Calu3 (cell line): ENCODE measurements at regions of chr6 and their contacts with region 1.

Region 1: DNA sequence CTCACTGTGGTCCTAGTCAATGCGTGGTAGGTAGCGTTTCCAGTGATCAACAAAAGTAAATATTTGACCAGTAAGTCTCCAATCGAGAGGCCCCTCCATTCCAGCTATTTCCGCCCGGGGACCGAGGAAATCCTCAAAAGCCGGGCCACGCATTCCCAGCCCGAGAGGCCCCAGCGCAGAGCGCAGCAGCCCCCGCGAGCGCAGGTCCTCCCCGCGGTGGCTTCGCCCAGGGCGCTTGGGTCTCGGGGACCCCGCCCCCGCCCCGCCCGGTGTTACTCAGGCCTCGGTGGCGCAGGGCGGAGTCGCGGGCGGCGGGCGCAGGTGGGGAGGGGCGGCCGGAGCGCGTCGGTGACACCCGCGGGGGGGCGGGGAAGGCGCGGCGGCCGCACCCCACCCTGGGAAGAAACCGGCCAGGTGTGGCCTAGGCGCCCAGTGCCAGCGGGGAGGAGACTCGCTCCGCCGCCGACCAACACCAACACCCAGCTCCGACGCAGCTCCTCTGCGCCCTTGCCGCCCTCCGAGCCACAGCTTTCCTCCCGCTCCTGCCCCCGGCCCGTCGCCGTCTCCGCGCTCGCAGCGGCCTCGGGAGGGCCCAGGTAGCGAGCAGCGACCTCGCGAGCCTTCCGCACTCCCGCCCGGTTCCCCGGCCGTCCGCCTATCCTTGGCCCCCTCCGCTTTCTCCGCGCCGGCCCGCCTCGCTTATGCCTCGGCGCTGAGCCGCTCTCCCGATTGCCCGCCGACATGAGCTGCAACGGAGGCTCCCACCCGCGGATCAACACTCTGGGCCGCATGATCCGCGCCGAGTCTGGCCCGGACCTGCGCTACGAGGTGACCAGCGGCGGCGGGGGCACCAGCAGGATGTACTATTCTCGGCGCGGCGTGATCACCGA is at the start of gene DSP:
- DNase-seq: peak; percentile 83
- H3K4me3 Mint-ChIP-seq: peak within 1 kb of the TSS; percentile 91
- H3K27ac Mint-ChIP-seq: no peak within 1 kb of the TSS
- H3K4me1 Mint-ChIP-seq: peaks cover 26% of the 10 kb centered on the region
- H3K27me3 Mint-ChIP-seq: no peaks in the 10 kb centered on the region
- CTCF ChIP-seq: no peak
- total RNA-seq, gene DSP: 46.4 and 57.7 TPM in 2 replicates

Region 2: GRCh38 chr6:7424967-7425807 is 116.2 kb before region 1 on chr6:
- CTCF ChIA-PET with region 1: interaction called, 6 read pairs
- intact Hi-C with region 1: loop called (anchors 5 kb)
- DNase-seq: peak; percentile 12
- H3K4me3 Mint-ChIP-seq: no peak overlapping the region
- H3K27ac Mint-ChIP-seq: no peak overlapping the region
- H3K4me1 Mint-ChIP-seq: no peaks in the 10 kb centered on the region
- H3K27me3 Mint-ChIP-seq: no peaks in the 10 kb centered on the region
- CTCF ChIP-seq: no peak

Region 3: GRCh38 chr6:7468382-7469081 is 72.9 kb before region 1 on chr6:
- CTCF ChIA-PET with region 1: no interaction called
- intact Hi-C with region 1: loop called (anchors 5 kb)
- DNase-seq: peak; percentile 5
- H3K4me3 Mint-ChIP-seq: peak overlapping the region; percentile 73
- H3K27ac Mint-ChIP-seq: peak overlapping the region; percentile 55
- H3K4me1 Mint-ChIP-seq: peaks cover 12% of the 10 kb centered on the region
- H3K27me3 Mint-ChIP-seq: no peaks in the 10 kb centered on the region
- CTCF ChIP-seq: no peak

Region 4: DNA sequence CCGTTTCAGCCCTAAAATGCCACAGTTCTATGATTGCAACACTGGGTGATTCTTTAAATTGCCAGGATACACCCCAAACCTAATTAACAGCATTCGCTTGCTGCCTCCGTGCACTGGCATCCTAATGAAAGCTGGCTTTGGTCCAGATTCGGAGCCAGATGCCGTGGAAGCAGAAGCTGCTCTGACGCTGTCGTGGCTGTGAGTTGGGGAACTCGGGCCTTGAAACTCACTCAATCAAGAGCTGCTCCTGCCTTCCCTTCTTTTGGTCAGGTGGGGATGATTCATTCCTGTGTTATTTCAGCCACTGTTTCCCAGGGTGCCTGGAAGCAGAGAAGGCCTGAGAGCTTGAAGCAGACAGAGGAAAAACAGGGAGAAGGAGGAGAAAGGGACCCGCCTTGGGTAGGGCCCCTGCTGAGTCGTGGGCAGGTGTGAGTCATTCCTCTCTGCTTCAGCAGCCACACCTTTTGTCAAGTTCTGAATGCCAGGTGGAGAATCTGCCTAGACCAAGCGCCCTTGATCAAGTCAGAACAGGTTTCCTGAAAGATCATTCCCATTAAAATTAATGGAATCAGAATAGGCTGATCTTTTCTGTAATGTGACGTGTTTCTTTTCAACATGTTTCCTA is 36.1 kb before region 1 on chr6:
- CTCF ChIA-PET with region 1: interaction called, 3 read pairs
- intact Hi-C with region 1: loop called (anchors 5 kb)
- DNase-seq: peak; percentile 77
- H3K4me3 Mint-ChIP-seq: peak overlapping the region; percentile 49
- H3K27ac Mint-ChIP-seq: peak overlapping the region; percentile 73
- H3K4me1 Mint-ChIP-seq: peaks cover 13% of the 10 kb centered on the region
- H3K27me3 Mint-ChIP-seq: no peaks in the 10 kb centered on the region
- CTCF ChIP-seq: no peak

Region 5: GRCh38 chr6:7589949-7590917 is 48.8 kb after region 1 on chr6 and contains the start of gene SNRNP48:
- CTCF ChIA-PET with region 1: interaction called, 7 read pairs
- intact Hi-C with region 1: loop called (anchors 5 kb)
- DNase-seq: peak; percentile 89
- H3K4me3 Mint-ChIP-seq: peak within 1 kb of the TSS; percentile 98
- H3K27ac Mint-ChIP-seq: peak within 1 kb of the TSS; percentile 84
- H3K4me1 Mint-ChIP-seq: peaks cover 52% of the 10 kb centered on the region
- H3K27me3 Mint-ChIP-seq: no peaks in the 10 kb centered on the region
- CTCF ChIP-seq: no peak
- total RNA-seq, gene SNRNP48: 11.7 and 16.1 TPM in 2 replicates

Region 6: DNA sequence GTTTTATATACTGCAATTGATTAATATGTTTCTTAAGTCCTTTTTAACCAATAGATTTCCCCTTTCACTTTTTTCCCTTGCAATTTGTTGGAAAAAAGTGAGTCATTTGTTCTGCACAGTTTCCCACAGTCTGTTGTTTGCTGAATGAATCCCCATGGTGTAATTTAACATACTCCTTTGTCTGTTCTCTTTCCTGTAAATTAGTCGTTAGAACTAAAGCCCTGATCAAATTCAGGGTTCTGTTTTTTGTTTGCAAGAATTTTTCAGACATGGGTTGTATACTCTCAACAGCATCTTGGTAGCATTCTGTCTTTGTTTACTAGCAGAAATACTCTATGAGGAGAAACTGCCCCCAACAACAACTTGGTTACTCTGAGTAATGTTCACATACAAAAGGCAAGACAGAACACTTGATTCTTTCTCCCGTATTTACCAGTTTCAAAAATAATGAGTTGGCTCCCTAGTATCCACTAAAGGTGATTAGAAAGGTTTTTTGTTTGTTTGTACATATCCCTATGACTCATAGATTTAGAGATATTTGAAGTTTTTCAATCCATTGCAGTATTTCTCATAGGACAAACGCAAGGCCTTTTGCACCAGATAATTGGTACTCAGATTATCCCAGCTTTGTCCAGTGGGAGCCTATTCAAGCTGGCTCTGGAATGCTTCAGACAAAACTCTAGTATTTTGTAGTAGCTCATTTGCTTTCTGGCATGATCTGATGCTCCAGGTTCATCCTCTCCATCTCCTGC is 506.3 kb after region 1 on chr6:
- CTCF ChIA-PET with region 1: no interaction called
- intact Hi-C with region 1: no loop called
- DNase-seq: no peak
- H3K4me3 Mint-ChIP-seq: no peak overlapping the region
- H3K27ac Mint-ChIP-seq: no peak overlapping the region
- H3K4me1 Mint-ChIP-seq: no peaks in the 10 kb centered on the region
- H3K27me3 Mint-ChIP-seq: no peaks in the 10 kb centered on the region
- CTCF ChIP-seq: no peak